ENCODE measurements at regions of chr18 and their contacts with region 1.

Region 1: DNA sequence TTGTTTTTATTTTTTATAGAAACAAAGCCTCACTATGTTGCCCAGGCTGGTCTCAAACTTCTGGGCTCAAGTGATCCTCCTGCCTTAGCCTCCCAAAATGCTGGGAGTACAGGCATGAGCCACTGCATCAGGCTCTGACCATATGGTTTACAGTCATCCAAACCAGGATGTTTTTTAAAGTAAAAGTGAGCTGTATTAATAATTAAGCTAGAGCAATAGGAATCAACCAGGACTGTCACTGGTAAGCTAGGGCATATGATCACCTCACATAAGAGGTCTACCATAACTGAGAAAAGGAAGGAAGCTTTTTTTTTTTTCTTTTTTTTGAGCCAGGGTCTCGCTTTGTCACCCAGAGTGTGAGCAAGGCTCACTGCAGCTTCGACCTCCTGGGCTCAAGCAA is 8.5 kb upstream of the RBBP8 start:
- DNase-seq: no peak
- H3K4me3 ChIP-seq: no peak overlapping the region
- H3K27ac ChIP-seq: peak overlapping the region; percentile 15 to 52
- H3K4me1 ChIP-seq: no peaks in the 10 kb centered on the region
- H3K27me3 ChIP-seq: no peaks in the 10 kb centered on the region
- CTCF ChIP-seq: no peak
- POLR2A ChIP-seq: no peak

Region 2: DNA sequence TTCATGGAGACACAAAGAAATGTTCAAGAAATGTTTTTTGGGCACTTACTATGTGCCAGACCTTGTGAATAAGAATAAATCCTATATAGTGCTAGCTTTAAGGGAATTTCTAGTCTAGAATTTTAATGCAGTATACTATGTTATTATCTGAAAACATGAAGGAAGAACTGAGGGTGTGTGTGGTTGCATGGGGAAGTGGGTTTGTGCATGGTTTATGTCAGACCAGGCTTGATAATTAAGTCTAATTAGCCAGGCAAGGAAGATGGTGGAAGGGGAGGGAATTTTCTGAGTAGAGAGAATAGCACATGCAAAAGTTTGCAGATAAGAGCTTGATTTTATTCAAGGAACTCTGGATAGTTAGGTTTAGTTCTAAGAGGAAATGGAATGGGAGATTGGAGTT is 15.1 kb after region 1 on chr18:
- intact Hi-C with region 1: loop called (anchors 2 kb)
- DNase-seq: no peak
- H3K4me3 ChIP-seq: no peak overlapping the region
- H3K27ac ChIP-seq: no peak overlapping the region
- H3K4me1 ChIP-seq: no peaks in the 10 kb centered on the region
- H3K27me3 ChIP-seq: no peaks in the 10 kb centered on the region
- CTCF ChIP-seq: no peak
- POLR2A ChIP-seq: no peak

Region 3: GRCh38 chr18:23115683-23116096 is 191.1 kb after region 1 on chr18:
- intact Hi-C with region 1: no loop called
- DNase-seq: peak in 1 of 2 donors; percentile 43
- H3K4me3 ChIP-seq: no peak overlapping the region
- H3K27ac ChIP-seq: peak overlapping the region; percentile 77 to 87
- H3K4me1 ChIP-seq: peaks cover 6 to 9% of the 10 kb centered on the region in 2 donors
- H3K27me3 ChIP-seq: no peaks in the 10 kb centered on the region
- CTCF ChIP-seq: no peak
- POLR2A ChIP-seq: no peak

Measured in breast epithelium (tissue), 4 donors.